Activated CD4-positive, alpha-beta T cell treated with anti-CD3 and anti-CD28 coated beads for 36 hours (primary cell): ENCODE measurements at regions of chr3 and their contacts with region 1.

Region 1: DNA sequence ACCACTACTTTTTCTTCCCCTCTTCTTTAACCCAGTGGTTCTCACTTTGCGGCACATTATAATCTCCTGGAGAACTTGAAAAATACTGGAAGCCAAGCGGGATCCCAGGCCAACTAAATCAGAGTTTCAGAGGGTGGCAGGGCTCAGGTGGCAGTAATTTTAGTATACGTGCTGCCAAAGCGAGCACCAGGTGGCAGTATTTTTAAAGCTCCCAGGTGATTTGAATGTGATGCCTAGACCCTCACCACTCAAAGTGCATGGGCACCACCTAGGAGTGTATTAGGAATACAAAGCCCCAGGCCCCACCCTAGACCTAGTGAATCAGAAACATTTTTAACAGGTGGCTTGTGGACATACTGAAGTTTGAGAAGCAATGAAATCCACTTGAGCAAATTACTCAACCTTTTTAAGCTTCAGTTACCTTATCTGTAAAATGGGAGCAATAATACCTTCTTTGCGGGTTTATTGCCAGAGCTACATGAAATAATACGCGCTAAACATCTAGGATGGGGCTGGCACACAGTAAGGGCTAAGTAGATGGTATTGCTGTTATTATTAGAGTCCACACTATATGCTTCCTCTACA is 8.3 kb downstream of the B3GALNT1 start:
- DNase-seq: peak; percentile 36
- ATAC-seq: no peak
- H3K4me3 Mint-ChIP-seq: no peak overlapping the region
- H3K27ac Mint-ChIP-seq: no peak overlapping the region
- H3K4me1 Mint-ChIP-seq: no peaks in the 10 kb centered on the region
- H3K27me3 Mint-ChIP-seq: no peaks in the 10 kb centered on the region

Region 2: DNA sequence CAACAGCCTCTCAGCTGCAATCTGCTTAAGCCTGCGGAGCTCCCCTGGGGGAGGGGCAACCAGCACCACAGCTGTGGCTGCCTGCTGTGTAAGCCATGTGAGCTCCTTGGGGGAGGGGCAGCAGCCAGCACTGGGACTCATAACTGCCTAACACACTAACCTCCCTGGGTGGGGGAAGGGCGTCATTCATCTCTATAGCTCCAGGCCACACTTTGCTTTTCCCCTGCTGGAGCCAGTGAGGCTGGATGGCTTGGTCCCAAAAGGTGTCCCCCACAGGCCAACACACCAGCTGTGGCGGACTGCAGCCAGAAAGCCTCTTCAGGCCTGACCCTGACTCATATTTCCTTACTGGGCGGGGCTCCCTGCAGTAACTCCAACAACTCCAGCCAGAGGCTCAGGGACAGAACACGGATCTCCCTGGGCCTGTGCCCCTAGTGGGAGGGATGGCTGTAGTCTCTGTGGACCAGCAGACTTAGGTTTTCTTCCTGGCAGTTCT is 211.0 kb before region 1 on chr3:
- CTCF ChIA-PET with region 1: no interaction called
- POLR2A ChIA-PET with region 1: no interaction called
- intact Hi-C with region 1: no loop called
- DNase-seq: peak; percentile 18
- ATAC-seq: no peak
- H3K4me3 Mint-ChIP-seq: no peak overlapping the region
- H3K27ac Mint-ChIP-seq: no peak overlapping the region
- H3K4me1 Mint-ChIP-seq: no peaks in the 10 kb centered on the region
- H3K27me3 Mint-ChIP-seq: no peaks in the 10 kb centered on the region

Region 3: DNA sequence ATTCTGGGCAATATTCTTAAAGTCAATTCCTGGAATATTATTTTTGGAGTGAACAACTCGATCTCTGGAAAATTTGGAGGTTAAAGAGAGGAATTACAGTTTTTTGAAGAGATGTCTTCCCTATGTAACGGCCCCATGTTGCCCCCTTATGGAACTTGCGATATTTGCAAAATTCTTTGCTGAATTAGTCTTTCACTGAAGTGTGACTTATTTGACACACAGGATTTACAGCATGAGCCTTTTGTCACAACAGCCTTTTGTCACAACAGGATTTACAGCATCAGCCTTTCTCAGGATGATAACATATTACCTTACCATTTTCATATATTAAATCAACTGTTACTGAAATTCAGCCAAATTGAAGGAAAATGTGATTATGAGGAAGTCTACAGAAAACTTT is 312.2 kb after region 1 on chr3:
- CTCF ChIA-PET with region 1: no interaction called
- POLR2A ChIA-PET with region 1: no interaction called
- intact Hi-C with region 1: loop called (anchors 5 kb)
- DNase-seq: peak; percentile 53
- ATAC-seq: no peak
- H3K4me3 Mint-ChIP-seq: no peak overlapping the region
- H3K27ac Mint-ChIP-seq: no peak overlapping the region
- H3K4me1 Mint-ChIP-seq: peaks cover 24% of the 10 kb centered on the region
- H3K27me3 Mint-ChIP-seq: peaks cover 2% of the 10 kb centered on the region